ENCODE measurements at regions of chr6 and their contacts with region 1.

Region 1: GRCh38 chr6:2952557-2953095 is 18.7 kb downstream of the SERPINB6 start:
- DNase-seq: peak; percentile 78
- H3K4me3 ChIP-seq: no peak overlapping the region
- H3K27me3 ChIP-seq: no peaks in the 10 kb centered on the region
- CTCF ChIP-seq: peak; percentile 99

Region 2: DNA sequence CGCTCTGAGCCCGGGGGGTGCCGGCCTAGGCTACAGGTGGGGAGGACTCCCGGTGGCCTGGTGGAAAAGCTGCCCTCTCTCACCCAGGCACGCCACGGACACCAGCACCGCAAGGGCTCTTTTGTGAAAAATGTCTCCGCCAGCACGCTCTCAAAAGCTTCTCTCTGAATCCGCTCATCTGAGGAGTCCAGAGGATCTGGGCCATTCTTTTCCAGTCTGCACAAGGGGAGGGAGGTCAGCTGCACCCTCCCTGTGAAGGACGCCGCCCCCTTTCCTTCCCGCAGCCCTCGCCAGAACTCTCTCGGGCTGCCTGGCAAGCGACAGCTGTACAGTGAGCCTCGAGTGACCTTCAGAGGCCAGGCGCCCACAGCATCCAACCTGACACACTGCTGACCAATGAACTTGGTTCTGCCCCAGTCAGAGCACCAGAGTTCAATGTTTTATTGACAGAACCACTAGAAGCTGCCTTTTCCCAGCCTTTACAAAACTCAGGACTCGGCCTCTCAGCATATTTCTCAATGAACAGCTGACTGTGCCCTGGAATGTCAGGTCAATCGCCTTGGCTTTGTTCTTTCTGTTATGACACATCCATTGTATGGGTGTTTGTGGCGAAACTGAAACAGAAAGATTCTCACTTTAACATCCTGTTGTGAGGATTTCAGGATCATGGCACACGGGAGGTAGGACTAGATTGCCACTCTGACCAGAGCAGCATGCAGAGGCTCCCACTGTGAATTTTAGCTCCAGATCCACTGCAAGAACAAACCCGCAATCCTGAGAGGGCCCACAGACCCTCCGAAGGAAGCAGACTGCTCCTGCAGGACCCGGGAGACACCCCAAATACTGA is 76.2 kb before region 1 on chr6:
- CTCF ChIA-PET with region 1: interaction called, 10 read pairs
- POLR2A ChIA-PET with region 1: no interaction called
- DNase-seq: peak; percentile 49
- H3K4me3 ChIP-seq: peak overlapping the region; percentile 12
- H3K27me3 ChIP-seq: peaks cover 3% of the 10 kb centered on the region; the same call in 1 of the 2 replicates
- CTCF ChIP-seq: no peak

Region 3: GRCh38 chr6:2931970-2932748 is 20.5 kb before region 1 on chr6:
- CTCF ChIA-PET with region 1: interaction called, 22 read pairs
- POLR2A ChIA-PET with region 1: no interaction called
- DNase-seq: peak; percentile 9
- H3K4me3 ChIP-seq: no peak overlapping the region
- H3K27me3 ChIP-seq: 0 out of 2 replicates have a peak, but pooled peaks cover 2% of the 10 kb centered on the region
- CTCF ChIP-seq: peak; percentile 99

Region 4: DNA sequence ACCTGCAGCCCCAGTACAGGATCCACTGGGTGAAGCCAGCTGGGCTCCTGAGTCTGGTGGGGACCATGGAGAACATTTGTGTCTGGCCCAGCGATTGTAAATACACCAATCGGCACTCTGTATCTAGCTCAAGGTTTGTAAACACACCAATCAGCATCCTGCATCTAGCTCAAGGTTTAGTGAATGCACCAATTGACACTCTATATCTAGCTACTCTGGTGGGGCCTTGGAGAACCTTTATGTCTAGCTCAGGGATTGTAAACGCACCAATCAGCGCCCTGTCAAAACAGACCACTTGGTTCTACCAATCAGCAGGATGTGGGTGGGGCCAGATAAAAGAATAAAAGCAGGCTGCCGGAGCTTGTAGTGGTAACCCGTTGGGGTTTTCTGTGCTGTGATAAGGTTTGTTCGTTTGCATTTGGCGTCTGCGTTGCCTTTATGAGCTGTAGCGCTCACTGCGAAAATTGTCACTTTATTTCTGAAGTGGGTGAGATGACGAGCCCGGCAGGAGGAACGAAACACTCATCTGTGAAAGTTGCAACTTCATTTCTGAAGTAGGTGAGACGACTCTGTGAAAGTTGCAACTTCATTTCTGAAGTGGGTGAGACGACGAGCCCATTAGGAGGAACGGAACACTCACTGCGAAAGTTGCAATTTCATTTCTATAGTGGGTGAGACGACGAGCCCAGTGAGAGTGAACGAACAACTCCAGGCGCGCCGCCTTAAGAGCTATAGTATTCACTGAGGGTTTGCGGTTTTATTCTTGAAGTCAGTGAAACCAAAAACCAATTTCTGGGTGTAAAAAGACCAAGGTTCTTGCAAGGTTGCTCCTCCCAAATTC is 12.4 kb before region 1 on chr6:
- CTCF ChIA-PET with region 1: interaction called, 22 read pairs
- POLR2A ChIA-PET with region 1: no interaction called
- DNase-seq: no peak
- H3K4me3 ChIP-seq: no peak overlapping the region
- H3K27me3 ChIP-seq: no peaks in the 10 kb centered on the region
- CTCF ChIP-seq: no peak

Region 5: GRCh38 chr6:2966347-2966746 is 13.7 kb after region 1 on chr6:
- CTCF ChIA-PET with region 1: interaction called, 25 read pairs
- POLR2A ChIA-PET with region 1: no interaction called
- DNase-seq: no peak
- H3K4me3 ChIP-seq: no peak overlapping the region
- H3K27me3 ChIP-seq: no peaks in the 10 kb centered on the region
- CTCF ChIP-seq: no peak

Region 6: DNA sequence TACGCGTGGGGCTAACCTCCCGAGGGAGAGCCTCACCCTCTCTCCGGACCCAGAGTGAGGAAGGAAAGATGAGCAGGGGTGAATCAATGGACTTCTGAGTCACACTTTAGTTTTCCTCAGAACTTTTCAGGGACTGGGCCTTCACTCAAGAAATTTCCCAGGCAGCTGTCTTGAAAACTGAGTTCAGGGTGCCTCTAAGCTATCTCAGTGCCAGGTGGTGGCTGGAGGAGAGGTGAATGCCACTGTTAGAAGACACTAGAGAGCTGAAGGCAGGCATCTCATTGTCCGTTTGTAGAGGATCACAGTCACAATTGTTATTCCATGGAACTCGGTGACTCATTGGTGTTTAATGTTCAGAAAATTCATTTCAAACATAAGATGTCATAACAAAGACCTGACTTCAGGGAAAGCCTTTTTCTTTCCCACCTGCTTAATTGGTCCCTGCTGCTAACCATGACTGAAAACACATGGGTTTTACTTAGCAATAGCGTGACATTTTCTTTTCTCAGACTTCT is 24.0 kb after region 1 on chr6:
- CTCF ChIA-PET with region 1: interaction called, 16 read pairs
- POLR2A ChIA-PET with region 1: no interaction called
- DNase-seq: peak; percentile 82
- H3K4me3 ChIP-seq: no peak overlapping the region
- H3K27me3 ChIP-seq: no peaks in the 10 kb centered on the region
- CTCF ChIP-seq: no peak

Region 7: DNA sequence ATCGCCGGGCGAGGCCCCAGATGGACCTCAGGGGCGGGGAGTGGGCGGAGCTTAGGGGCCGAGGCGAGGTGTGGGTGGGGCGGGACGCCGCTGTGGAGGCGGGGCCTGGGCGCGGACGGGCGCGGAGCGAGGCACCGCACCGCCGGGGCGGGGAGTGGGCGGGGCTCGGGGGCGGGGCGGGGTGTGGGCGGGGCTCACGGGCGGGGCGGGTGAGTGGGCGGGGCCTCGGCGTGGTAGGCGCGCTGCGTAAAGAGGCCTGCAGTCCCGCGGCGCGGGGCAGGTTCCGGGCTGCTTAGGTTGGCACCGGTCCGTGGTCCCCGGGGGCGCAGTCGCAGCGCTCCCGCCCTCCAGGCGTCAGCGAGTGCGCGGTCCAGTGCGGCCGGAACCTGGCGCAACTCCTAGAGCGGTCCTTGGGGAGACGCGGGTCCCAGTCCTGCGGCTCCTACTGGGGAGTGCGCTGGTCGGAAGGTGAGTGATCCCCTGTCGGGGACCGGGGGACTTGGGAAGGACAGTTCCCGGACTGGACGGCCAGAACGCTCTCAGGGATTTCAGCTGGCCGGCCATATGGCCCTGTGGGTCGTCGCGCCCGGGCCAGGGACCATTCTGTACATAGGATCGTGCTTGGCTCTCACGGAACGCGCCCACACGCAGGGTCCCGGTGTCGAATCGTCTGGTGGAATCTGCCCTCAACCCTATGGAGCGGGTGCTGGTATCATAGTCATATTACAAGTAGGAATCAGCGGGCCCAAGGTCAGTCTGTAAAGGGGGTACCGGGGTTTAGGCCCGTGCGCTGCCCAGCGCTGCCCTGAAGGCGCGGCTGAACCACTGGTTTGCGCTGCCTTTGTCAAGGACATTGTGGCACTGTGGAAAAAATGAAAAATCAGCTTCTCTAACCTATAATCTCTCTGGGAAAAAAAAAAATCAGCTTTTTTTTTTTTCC is 47.3 kb after region 1 on chr6 and contains the start of gene NQO2:
- CTCF ChIA-PET with region 1: interaction called, 12 read pairs
- POLR2A ChIA-PET with region 1: no interaction called
- DNase-seq: no peak
- H3K4me3 ChIP-seq: peak within 1 kb of the TSS; percentile 87
- H3K27me3 ChIP-seq: no peaks in the 10 kb centered on the region
- CTCF ChIP-seq: no peak
- polyA plus RNA-seq, gene NQO2: 54.4 and 56.2 TPM in 2 replicates